H1 (cell line): ENCODE measurements at regions of chr3 and their contacts with region 1.

Region 1: DNA sequence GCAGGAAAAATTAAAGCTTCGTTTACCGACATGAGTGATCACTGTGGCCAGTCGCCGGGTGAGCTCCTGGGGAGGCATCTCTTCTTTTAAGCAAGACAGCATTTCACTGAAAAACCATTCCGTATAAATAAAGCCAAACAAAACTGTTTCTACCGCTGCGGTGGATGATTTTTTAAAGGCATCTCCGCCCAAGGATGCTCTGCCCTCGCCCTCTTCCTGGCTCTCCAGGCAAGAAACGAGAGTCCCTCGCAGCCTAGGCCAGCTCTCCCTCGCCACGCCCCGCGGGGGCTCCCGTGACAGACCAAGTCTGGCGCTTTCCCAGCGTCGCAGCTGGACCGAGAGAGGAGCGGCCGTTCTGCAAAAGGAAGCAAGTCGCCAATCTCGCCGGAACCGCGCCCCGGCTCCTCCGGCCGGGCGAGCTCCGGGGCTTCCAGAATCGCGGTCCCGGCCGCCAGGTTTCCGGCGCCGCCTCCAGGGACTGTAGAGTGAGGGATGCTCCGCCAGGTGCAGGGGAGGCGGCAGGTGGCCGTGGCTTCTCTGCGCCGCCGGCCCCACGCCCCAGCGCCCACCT is 458 bp downstream of the MCF2L2 start:
- DNase-seq: peak in 1 of 2 experiments; percentile 75
- H3K4me3 ChIP-seq: peak overlapping the region; percentile 83 to 97 (median 88)
- H3K27ac ChIP-seq: no peak overlapping the region
- H3K4me1 ChIP-seq: peaks cover 0 to 5% (median 5%) of the 10 kb centered on the region in 4 experiments; a peak in 5 of 7 replicates
- H3K27me3 ChIP-seq: peaks cover 0 to 7% (median 3%) of the 10 kb centered on the region in 4 experiments; a peak in 5 of 7 replicates
- CTCF ChIP-seq: no peak
- EP300 ChIP-seq: no peak
- POLR2A ChIP-seq: no peak
- RAD21 ChIP-seq: no peak

Region 2: GRCh38 chr3:183233966-183234365 is 194.0 kb before region 1 on chr3:
- CTCF ChIA-PET with region 1: no interaction called
- POLR2A ChIA-PET with region 1: no interaction called
- DNase-seq: no peak
- H3K4me3 ChIP-seq: no peak overlapping the region
- H3K27ac ChIP-seq: no peak overlapping the region
- H3K4me1 ChIP-seq: no peaks in the 10 kb centered on the region
- H3K27me3 ChIP-seq: no peaks in the 10 kb centered on the region
- CTCF ChIP-seq: no peak
- EP300 ChIP-seq: no peak
- POLR2A ChIP-seq: no peak
- RAD21 ChIP-seq: no peak

Region 3: GRCh38 chr3:183438735-183439134 is 10.8 kb after region 1 on chr3:
- CTCF ChIA-PET with region 1: interaction called, 3 read pairs
- POLR2A ChIA-PET with region 1: interaction called, 11 read pairs
- DNase-seq: peak in 1 of 2 experiments; percentile 23
- H3K4me3 ChIP-seq: no peak overlapping the region
- H3K27ac ChIP-seq: no peak overlapping the region
- H3K4me1 ChIP-seq: peaks cover 7 to 26% (median 20%) of the 10 kb centered on the region in 4 experiments; a peak in 6 of 7 replicates
- H3K27me3 ChIP-seq: no peaks in the 10 kb centered on the region; a peak in 1 of 7 replicates
- CTCF ChIP-seq: no peak
- EP300 ChIP-seq: no peak
- POLR2A ChIP-seq: no peak
- RAD21 ChIP-seq: no peak

Region 4: GRCh38 chr3:183447206-183448001 is 19.4 kb after region 1 on chr3:
- CTCF ChIA-PET with region 1: interaction called, 3 read pairs
- POLR2A ChIA-PET with region 1: interaction called, 14 read pairs
- DNase-seq: peak; percentile 94 to 95
- H3K4me3 ChIP-seq: peak overlapping the region; percentile 80 to 95 (median 92)
- H3K27ac ChIP-seq: peak overlapping the region; percentile 67; the same call in 1 of the 2 replicates
- H3K4me1 ChIP-seq: no peaks in the 10 kb centered on the region
- H3K27me3 ChIP-seq: no peaks in the 10 kb centered on the region
- CTCF ChIP-seq: no peak
- EP300 ChIP-seq: peak in 1 of 2 experiments; percentile 4; a peak in 1 of 3 replicates
- POLR2A ChIP-seq: peak; percentile 93 to 97
- RAD21 ChIP-seq: no peak; a peak in 1 of 4 replicates